Activated naive CD4-positive, alpha-beta T cell treated with anti-CD3 and anti-CD28 coated beads for 36 hours (primary cell): ENCODE measurements at regions of chr3 and their contacts with region 1.

Region 1: GRCh38 chr3:19946832-19947548 is at the start of gene RAB5A:
- DNase-seq: peak; percentile 98
- H3K4me3 Mint-ChIP-seq: peak within 1 kb of the TSS; percentile 100
- H3K27ac Mint-ChIP-seq: peak within 1 kb of the TSS; percentile 100
- H3K4me1 Mint-ChIP-seq: peaks cover 43% of the 10 kb centered on the region
- H3K27me3 Mint-ChIP-seq: no peaks in the 10 kb centered on the region
- total RNA-seq, gene RAB5A: 46.4 to 47.5 TPM

Region 2: DNA sequence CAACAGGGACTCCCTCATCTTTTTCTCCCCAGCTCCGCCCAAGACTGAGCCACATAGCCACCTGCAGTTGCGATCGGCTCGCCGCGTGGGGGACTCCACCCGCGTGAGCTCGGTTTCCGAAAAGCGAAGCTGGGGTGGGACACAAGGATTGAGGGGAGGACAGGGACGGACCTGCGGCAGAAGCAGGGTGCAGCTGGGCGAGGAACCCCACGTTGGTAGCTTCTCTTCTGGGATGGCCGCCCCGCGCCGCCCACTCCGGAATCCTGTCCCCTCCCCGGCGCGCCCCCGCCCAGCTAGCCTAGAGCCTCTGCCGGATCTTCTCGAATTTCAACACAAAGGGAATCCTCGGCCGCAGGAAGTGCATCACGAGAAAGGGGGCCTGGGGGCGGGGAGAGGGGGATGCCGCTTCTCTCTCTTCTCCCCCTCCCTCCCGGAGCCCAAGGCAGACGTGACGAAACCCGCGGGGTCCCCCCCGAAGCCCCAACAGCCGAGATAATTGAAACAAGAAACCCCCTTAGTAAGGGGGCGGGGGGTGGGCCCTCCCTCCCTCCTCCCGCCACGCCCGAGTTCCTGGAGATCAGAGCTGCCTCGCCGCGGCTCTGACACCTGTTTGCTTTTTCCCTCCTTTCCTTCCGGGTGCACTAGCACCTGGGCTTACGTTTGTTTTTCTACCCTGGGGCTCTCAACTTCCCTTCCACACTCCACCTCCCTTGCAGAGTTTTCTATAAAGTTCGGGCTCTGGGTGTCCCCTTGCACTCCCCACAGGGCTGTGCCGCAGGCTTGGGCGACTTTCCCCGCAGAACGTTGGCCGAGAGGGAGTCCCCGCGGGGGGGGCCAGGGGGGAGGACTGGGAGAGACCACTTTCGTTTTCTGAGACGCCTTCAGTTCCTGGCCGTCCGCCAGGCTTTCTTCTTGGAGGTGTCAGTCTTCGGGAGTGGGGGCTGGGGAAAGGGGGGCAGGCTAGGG is 800.0 kb before region 1 on chr3:
- CTCF ChIA-PET with region 1: no interaction called
- intact Hi-C with region 1: loop called (anchors 2 kb)
- DNase-seq: peak; percentile 78
- H3K4me3 Mint-ChIP-seq: peak overlapping the region; percentile 81
- H3K27ac Mint-ChIP-seq: peak overlapping the region; percentile 54
- H3K4me1 Mint-ChIP-seq: peaks cover 15% of the 10 kb centered on the region
- H3K27me3 Mint-ChIP-seq: peaks cover 34% of the 10 kb centered on the region

Region 3: DNA sequence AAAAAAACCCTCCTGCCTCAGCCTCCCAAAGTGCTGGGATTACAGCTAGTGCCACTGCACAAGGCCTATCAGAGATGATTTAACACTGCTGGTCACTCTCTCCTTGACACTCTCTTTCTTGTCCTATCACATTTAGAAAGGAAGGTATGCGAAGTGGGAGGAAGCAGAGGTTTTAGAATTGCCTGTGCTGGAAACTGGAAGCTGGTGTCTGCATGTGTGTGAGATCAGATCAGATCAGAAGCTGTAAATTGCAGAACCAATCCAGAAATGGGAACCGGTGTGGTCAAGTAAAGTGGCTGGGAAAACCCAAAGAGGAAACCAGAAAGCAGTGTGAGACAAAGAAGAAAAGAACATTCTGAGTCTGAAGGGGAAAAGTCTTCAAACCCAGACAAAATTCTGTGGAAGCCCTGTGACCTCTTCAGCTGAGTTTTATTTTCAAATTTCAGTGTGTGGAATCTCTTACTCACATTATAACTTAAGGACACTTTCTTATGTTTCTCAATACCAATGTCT is 15.8 kb before region 1 on chr3:
- CTCF ChIA-PET with region 1: no interaction called
- intact Hi-C with region 1: loop called (anchors 1 kb)
- DNase-seq: peak; percentile 62
- H3K4me3 Mint-ChIP-seq: no peak overlapping the region
- H3K27ac Mint-ChIP-seq: no peak overlapping the region
- H3K4me1 Mint-ChIP-seq: peaks cover 23% of the 10 kb centered on the region
- H3K27me3 Mint-ChIP-seq: peaks cover 10% of the 10 kb centered on the region

Region 4: DNA sequence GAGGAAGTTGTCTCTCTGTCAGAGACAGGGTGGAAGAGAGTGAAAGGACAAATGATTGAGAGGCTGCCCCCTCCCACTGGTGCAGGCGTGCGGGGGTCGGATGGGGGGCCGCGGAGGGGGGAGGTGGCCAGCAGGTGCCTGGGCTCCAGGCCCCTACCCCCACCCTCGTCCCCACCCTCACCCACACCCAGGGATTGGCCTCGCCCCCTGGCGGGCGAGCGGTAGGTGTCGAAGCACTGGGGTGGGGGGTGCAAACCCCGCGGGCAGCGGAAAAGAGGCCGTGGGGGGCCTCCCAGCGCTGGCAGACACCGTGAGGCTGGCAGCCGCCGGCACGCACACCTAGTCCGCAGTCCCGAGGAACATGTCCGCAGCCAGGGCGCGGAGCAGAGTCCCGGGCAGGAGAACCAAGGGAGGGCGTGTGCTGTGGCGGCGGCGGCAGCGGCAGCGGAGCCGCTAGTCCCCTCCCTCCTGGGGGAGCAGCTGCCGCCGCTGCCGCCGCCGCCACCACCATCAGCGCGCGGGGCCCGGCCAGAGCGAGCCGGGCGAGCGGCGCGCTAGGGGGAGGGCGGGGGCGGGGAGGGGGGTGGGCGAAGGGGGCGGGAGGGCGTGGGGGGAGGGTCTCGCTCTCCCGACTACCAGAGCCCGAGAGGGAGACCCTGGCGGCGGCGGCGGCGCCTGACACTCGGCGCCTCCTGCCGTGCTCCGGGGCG is 92.9 kb after region 1 on chr3 and contains the start of gene KAT2B:
- CTCF ChIA-PET with region 1: interaction called, 3 read pairs
- intact Hi-C with region 1: loop called (anchors 1 kb)
- DNase-seq: peak; percentile 87
- H3K4me3 Mint-ChIP-seq: peak within 1 kb of the TSS; percentile 95
- H3K27ac Mint-ChIP-seq: peak within 1 kb of the TSS; percentile 92
- H3K4me1 Mint-ChIP-seq: peaks cover 42% of the 10 kb centered on the region
- H3K27me3 Mint-ChIP-seq: no peaks in the 10 kb centered on the region
- total RNA-seq, gene KAT2B: 9.4 to 11.5 TPM

Region 5: GRCh38 chr3:20104167-20104661 is 157.2 kb after region 1 on chr3:
- CTCF ChIA-PET with region 1: no interaction called
- intact Hi-C with region 1: loop called (anchors 5 kb)
- DNase-seq: peak; percentile 29
- H3K4me3 Mint-ChIP-seq: no peak overlapping the region
- H3K27ac Mint-ChIP-seq: no peak overlapping the region
- H3K4me1 Mint-ChIP-seq: peaks cover 22% of the 10 kb centered on the region
- H3K27me3 Mint-ChIP-seq: no peaks in the 10 kb centered on the region